Panc1 (cell line): ENCODE measurements at regions of chr10 and their contacts with region 1.

Region 1: DNA sequence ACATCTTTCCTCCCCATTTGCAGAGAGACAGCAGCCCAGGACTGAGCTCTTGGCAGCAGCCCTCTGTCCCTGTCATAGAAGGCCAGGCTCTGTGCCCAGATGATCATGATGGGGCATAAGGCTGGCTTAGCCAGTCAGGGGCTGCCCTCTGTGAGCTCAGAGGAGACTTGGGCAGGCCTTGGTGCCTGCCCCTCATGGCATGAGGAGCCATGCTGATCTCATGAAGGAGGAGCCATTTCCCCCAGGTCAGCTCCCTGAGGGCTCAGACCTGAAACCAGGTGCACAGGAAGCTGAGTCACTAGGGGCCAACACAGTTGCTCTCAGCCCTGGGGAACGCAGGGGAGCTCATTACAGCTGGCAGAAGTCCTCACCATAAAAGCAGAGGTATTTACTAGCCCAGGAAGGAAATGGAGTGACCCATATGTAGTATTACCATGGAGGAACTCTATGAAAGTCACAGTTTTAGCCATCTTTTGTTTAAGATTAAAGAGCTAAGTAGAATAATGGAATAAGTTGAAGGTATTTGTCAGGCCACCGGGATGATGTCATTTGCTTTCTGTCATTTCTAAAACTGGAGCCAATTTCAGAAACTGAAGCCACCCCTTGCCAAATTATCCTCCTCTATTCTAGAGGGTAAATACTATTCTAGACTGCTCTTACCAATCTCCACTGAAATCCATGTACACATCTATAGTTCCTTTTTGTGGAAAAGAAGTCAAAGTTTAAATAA is 362.4 kb upstream of the ZNF32 start:
- DNase-seq: no peak
- ATAC-seq: no peak
- H3K4me3 ChIP-seq: no peak overlapping the region
- H3K27ac ChIP-seq: no peak overlapping the region
- H3K4me1 ChIP-seq: no peaks in the 10 kb centered on the region
- H3K27me3 ChIP-seq: no peaks in the 10 kb centered on the region
- CTCF ChIP-seq: no peak

Region 2: GRCh38 chr10:43959364-43960128 is 51.5 kb before region 1 on chr10:
- CTCF ChIA-PET with region 1: no interaction called
- POLR2A ChIA-PET with region 1: no interaction called
- in situ Hi-C with region 1: no loop called
- intact Hi-C with region 1: loop called (anchors 10 kb)
- DNase-seq: no peak
- ATAC-seq: no peak
- H3K4me3 ChIP-seq: no peak overlapping the region
- H3K27ac ChIP-seq: no peak overlapping the region
- H3K4me1 ChIP-seq: no peaks in the 10 kb centered on the region
- H3K27me3 ChIP-seq: no peaks in the 10 kb centered on the region; the same call in 1 of the 2 replicates
- CTCF ChIP-seq: no peak

Region 3: DNA sequence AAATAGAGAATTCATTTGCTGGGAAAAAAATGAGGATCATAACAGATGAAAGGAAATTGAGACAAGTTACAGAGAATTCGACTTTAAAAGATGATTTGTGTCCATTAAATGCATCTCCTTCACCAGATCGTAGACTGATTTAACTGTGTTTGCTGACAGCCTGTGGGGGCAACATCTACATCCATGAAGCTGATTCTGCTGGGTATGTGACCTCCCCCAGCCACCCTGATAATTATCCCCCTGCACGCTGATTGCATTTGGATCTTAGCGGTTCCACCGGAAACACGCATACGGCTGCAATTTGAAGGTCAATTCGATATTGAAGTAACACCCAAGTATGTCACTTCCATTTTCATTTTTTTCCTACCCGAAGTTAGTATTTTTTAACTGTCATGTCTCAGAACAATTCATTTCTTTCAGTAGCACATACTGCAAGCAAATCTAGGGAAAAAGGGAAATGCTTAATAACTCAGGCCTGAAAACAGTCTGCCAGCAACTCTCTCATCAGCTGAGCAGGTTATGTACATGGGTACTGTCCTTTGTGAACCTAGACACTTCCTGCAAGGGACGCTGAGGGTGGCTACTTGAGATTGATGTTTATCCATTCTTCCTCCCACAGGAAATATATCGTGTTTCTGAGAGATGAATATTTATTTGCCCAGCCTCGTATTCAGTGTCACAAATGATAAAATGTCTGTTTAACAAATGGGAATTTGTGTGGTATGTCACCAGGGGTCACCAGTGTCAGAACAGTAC is 1124.6 kb after region 1 on chr10:
- CTCF ChIA-PET with region 1: no interaction called
- POLR2A ChIA-PET with region 1: no interaction called
- in situ Hi-C with region 1: no loop called
- intact Hi-C with region 1: no loop called
- DNase-seq: no peak
- ATAC-seq: no peak
- H3K4me3 ChIP-seq: no peak overlapping the region
- H3K27ac ChIP-seq: no peak overlapping the region
- H3K4me1 ChIP-seq: no peaks in the 10 kb centered on the region
- H3K27me3 ChIP-seq: peaks cover 4% of the 10 kb centered on the region; the same call in 1 of the 2 replicates
- CTCF ChIP-seq: no peak